Left ventricle myocardium superior (tissue), 1 donor: ENCODE measurements at regions of chr1 and their contacts with region 1.

Region 1: GRCh38 chr1:180515864-180516388 is 13.5 kb upstream of the ACBD6 start:
- DNase-seq: peak; percentile 47
- ATAC-seq: peak; percentile 98

Region 2: GRCh38 chr1:180291004-180291403 is 224.9 kb before region 1 on chr1:
- intact Hi-C with region 1: no loop called
- DNase-seq: no peak
- ATAC-seq: no peak

Region 3: GRCh38 chr1:180415985-180416633 is 99.8 kb before region 1 on chr1:
- intact Hi-C with region 1: no loop called
- DNase-seq: no peak
- ATAC-seq: no peak

Region 4: GRCh38 chr1:180863158-180863775 is 347.3 kb after region 1 on chr1:
- intact Hi-C with region 1: loop called (anchors 5 kb)
- DNase-seq: no peak
- ATAC-seq: peak; percentile 33